ENCODE measurements at regions of chr6 and their contacts with region 1.

Region 1: GRCh38 chr6:41008011-41008410 is 31.0 kb downstream of the UNC5CL start:
- DNase-seq: no peak
- H3K4me3 ChIP-seq: no peak overlapping the region
- H3K27ac ChIP-seq: no peak overlapping the region
- H3K4me1 ChIP-seq: no peaks in the 10 kb centered on the region
- H3K27me3 ChIP-seq: peaks cover 6% of the 10 kb centered on the region
- CTCF ChIP-seq: no peak

Region 2: GRCh38 chr6:41066867-41067304 is 58.9 kb after region 1 on chr6:
- CTCF ChIA-PET with region 1: no interaction called
- POLR2A ChIA-PET with region 1: no interaction called
- intact Hi-C with region 1: loop called (anchors 5 kb)
- DNase-seq: peak; percentile 77
- H3K4me3 ChIP-seq: no peak overlapping the region
- H3K27ac ChIP-seq: no peak overlapping the region
- H3K4me1 ChIP-seq: peaks cover 11% of the 10 kb centered on the region
- H3K27me3 ChIP-seq: no peaks in the 10 kb centered on the region
- CTCF ChIP-seq: peak; percentile 87

Region 3: DNA sequence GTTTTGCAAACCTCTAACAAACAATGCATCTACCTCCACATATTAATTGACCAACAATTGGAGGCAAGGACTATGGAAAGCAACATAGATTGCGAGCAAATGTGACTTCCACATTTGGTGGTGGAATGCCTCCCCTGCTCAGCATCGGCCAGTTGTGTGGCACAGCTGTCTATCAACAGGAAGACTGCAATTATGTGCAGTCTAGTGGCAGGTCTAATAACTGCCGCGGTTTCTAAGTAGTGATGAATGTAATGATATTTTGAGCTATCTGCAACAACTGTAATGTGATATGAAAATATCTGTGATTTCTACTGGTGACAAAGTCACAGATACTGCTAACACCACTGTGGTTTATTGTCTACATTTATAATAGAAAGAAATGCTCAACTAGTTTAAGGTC is 384.2 kb after region 1 on chr6:
- CTCF ChIA-PET with region 1: no interaction called
- POLR2A ChIA-PET with region 1: no interaction called
- intact Hi-C with region 1: no loop called
- DNase-seq: no peak
- H3K4me3 ChIP-seq: no peak overlapping the region
- H3K27ac ChIP-seq: no peak overlapping the region
- H3K4me1 ChIP-seq: no peaks in the 10 kb centered on the region
- H3K27me3 ChIP-seq: peaks cover 9% of the 10 kb centered on the region
- CTCF ChIP-seq: no peak

Measured in A673 (cell line).